ENCODE measurements at regions of chr13 and their contacts with region 1.

Region 1: GRCh38 chr13:44917589-44918325 is 71.5 kb downstream of the NUFIP1 start:
- DNase-seq: peak; percentile 95 to 99 (median 98)
- ATAC-seq: peak; percentile 78
- H3K4me3 ChIP-seq: peak overlapping the region; percentile 54 to 66
- H3K4me3 Mint-ChIP-seq: no peak overlapping the region
- H3K27ac ChIP-seq: peak overlapping the region; percentile 66 to 90
- H3K27ac Mint-ChIP-seq: no peak overlapping the region
- H3K4me1 ChIP-seq: peaks cover 7% of the 10 kb centered on the region
- H3K4me1 Mint-ChIP-seq: peaks cover 14% of the 10 kb centered on the region
- H3K27me3 ChIP-seq: no peaks in the 10 kb centered on the region
- H3K27me3 Mint-ChIP-seq: no peaks in the 10 kb centered on the region
- CTCF ChIP-seq: peak; percentile 39

Region 2: GRCh38 chr13:44141725-44142539 is 775.8 kb before region 1 on chr13:
- CTCF ChIA-PET with region 1: no interaction called
- POLR2A ChIA-PET with region 1: no interaction called
- intact Hi-C with region 1: loop called (anchors 1 to 5 kb)
- DNase-seq: peak; percentile 84 to 98 (median 91)
- ATAC-seq: peak; percentile 96
- H3K4me3 ChIP-seq: peak overlapping the region; percentile 78 to 81
- H3K4me3 Mint-ChIP-seq: peak overlapping the region; percentile 91
- H3K27ac ChIP-seq: peak overlapping the region; percentile 68 to 89
- H3K27ac Mint-ChIP-seq: peak overlapping the region; percentile 94
- H3K4me1 ChIP-seq: peaks cover 13% of the 10 kb centered on the region
- H3K4me1 Mint-ChIP-seq: peaks cover 15% of the 10 kb centered on the region
- H3K27me3 ChIP-seq: no peaks in the 10 kb centered on the region
- H3K27me3 Mint-ChIP-seq: peaks cover 2% of the 10 kb centered on the region
- CTCF ChIP-seq: no peak

Region 3: DNA sequence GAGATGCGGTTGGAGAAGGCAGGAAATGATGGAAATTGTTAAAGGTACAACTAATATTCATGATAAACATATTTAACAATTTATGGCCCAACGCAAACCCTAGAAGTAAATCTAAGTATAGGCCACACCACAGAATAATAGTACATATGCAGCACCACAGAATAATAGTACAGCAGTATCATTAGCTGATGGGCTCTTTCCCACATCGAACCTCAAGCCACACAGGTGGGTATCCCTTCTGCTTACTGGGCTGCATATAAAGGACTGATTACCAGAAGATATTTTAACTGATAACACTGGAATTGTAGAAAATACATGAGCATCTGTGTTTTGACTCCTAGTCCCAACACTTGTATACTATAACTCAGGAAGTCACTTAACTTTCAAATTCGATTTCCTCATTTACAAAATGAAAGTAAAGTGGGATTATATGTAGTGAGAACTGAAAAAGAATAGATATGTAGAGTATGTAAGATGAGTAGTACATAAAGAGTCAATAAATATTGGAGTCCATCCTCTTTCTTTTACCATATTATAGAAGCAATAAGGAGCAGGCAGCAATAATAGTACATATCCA is 433.1 kb before region 1 on chr13:
- CTCF ChIA-PET with region 1: interaction called, 6 read pairs
- POLR2A ChIA-PET with region 1: no interaction called
- intact Hi-C with region 1: loop called in 1 of 2 experiments (anchors 2 kb)
- DNase-seq: peak in 2 of 9 experiments; percentile 2 to 31
- ATAC-seq: no peak
- H3K4me3 ChIP-seq: peak overlapping the region in 1 of 2 experiments; percentile 23
- H3K4me3 Mint-ChIP-seq: peak overlapping the region; percentile 59
- H3K27ac ChIP-seq: peak overlapping the region in 1 of 2 experiments; percentile 5
- H3K27ac Mint-ChIP-seq: peak overlapping the region; percentile 42
- H3K4me1 ChIP-seq: peaks cover 10% of the 10 kb centered on the region
- H3K4me1 Mint-ChIP-seq: peaks cover 13% of the 10 kb centered on the region
- H3K27me3 ChIP-seq: no peaks in the 10 kb centered on the region
- H3K27me3 Mint-ChIP-seq: no peaks in the 10 kb centered on the region
- CTCF ChIP-seq: no peak

Region 4: DNA sequence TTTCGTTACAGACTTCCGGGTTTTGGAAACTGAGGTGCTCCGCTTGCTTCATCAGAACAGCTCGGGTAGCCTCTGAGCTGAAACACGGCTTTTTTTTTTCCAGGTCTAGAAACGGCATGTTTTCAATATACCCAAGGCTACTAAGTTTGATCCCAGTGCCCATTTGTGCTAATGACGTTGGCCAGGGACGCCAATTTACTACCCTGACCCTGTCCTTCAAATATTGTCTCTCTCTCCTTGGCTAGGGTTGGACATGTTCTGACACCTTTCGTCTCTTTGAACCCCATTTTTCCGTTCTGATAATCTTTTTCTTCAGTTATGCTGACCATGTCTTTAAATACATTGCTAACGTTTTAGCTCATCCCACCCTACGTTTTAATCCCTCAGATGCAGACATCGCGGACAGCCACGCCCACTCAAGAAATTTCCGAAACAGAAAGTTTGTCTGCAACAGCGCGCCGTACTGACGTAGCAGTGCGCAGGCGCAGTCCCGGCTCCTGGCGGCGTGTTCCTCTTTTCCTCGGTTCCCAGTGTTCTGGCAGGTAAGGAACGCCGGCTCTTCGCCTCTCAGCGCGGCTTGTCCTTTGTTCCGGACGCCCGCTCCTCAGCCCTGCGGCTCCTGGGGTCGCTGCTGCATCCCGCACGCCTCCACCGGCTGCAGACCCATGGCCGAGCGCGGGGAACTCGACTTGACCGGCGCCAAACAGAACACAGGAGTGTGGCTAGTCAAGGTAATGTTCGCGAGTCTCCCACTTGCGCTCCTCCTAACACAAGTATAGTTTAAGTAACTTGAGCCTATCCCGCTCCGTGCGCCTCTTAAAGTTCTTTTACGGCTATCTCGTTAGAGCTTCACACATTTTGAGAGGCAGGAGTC is 202.5 kb after region 1 on chr13 and contains the start of gene GTF2F2:
- CTCF ChIA-PET with region 1: no interaction called
- POLR2A ChIA-PET with region 1: no interaction called
- intact Hi-C with region 1: loop called (anchors 2 to 5 kb)
- DNase-seq: peak; percentile 73 to 94 (median 88)
- ATAC-seq: peak; percentile 65
- H3K4me3 ChIP-seq: peak within 1 kb of the TSS; percentile 70 to 93
- H3K4me3 Mint-ChIP-seq: no peak within 1 kb of the TSS
- H3K27ac ChIP-seq: peak within 1 kb of the TSS; percentile 93 to 97
- H3K27ac Mint-ChIP-seq: no peak within 1 kb of the TSS
- H3K4me1 ChIP-seq: peaks cover 22% of the 10 kb centered on the region
- H3K4me1 Mint-ChIP-seq: peaks cover 20% of the 10 kb centered on the region
- H3K27me3 ChIP-seq: no peaks in the 10 kb centered on the region
- H3K27me3 Mint-ChIP-seq: no peaks in the 10 kb centered on the region
- CTCF ChIP-seq: no peak
- total RNA-seq, gene GTF2F2: 13.2 to 14.8 TPM

Region 5: GRCh38 chr13:45417790-45418534 is 500.2 kb after region 1 on chr13 and contains the start of gene SLC25A30:
- CTCF ChIA-PET with region 1: no interaction called
- POLR2A ChIA-PET with region 1: no interaction called
- intact Hi-C with region 1: loop called in 1 of 2 experiments (anchors 1 kb)
- DNase-seq: peak; percentile 83 to 96 (median 91)
- ATAC-seq: peak; percentile 90
- H3K4me3 ChIP-seq: peak within 1 kb of the TSS; percentile 88 to 97
- H3K4me3 Mint-ChIP-seq: peak within 1 kb of the TSS; percentile 94
- H3K27ac ChIP-seq: peak within 1 kb of the TSS; percentile 81 to 85
- H3K27ac Mint-ChIP-seq: peak within 1 kb of the TSS; percentile 96
- H3K4me1 ChIP-seq: peaks cover 24% of the 10 kb centered on the region
- H3K4me1 Mint-ChIP-seq: peaks cover 32% of the 10 kb centered on the region
- H3K27me3 ChIP-seq: no peaks in the 10 kb centered on the region
- H3K27me3 Mint-ChIP-seq: no peaks in the 10 kb centered on the region
- CTCF ChIP-seq: no peak
- total RNA-seq, gene SLC25A30: 37.7 to 40.5 TPM

Region 6: GRCh38 chr13:46160471-46161066 is 1242.8 kb after region 1 on chr13:
- CTCF ChIA-PET with region 1: no interaction called
- POLR2A ChIA-PET with region 1: no interaction called
- intact Hi-C with region 1: loop called in 1 of 2 experiments (anchors 10 kb)
- DNase-seq: peak in 3 of 9 experiments; percentile 41 to 92 (median 85)
- ATAC-seq: peak; percentile 76
- H3K4me3 ChIP-seq: no peak overlapping the region
- H3K4me3 Mint-ChIP-seq: peak overlapping the region; percentile 73
- H3K27ac ChIP-seq: peak overlapping the region in 1 of 2 experiments; percentile 77
- H3K27ac Mint-ChIP-seq: peak overlapping the region; percentile 94
- H3K4me1 ChIP-seq: peaks cover 45% of the 10 kb centered on the region
- H3K4me1 Mint-ChIP-seq: peaks cover 55% of the 10 kb centered on the region
- H3K27me3 ChIP-seq: no peaks in the 10 kb centered on the region
- H3K27me3 Mint-ChIP-seq: no peaks in the 10 kb centered on the region
- CTCF ChIP-seq: peak; percentile 79

Measured in CD8-positive, alpha-beta T cell (primary cell).